ENCODE measurements at regions of chr2 and their contacts with region 1.

Region 1: GRCh38 chr2:71923887-71924533 is 223.7 kb downstream of the CYP26B1 start:
- DNase-seq: peak in 1 of 2 donors; percentile 75
- ATAC-seq: peak in 2 of 3 donors; percentile 58 to 67
- H3K4me3 ChIP-seq: no peak overlapping the region
- H3K4me3 Mint-ChIP-seq: no peak overlapping the region
- H3K27ac ChIP-seq: no peak overlapping the region
- H3K27ac Mint-ChIP-seq: no peak overlapping the region
- H3K4me1 ChIP-seq: no peaks in the 10 kb centered on the region
- H3K4me1 Mint-ChIP-seq: no peaks in the 10 kb centered on the region
- H3K27me3 ChIP-seq: no peaks in the 10 kb centered on the region
- H3K27me3 Mint-ChIP-seq: peaks cover 0 to 3% of the 10 kb centered on the region in 2 donors
- CTCF ChIP-seq: peak; percentile 74

Region 2: DNA sequence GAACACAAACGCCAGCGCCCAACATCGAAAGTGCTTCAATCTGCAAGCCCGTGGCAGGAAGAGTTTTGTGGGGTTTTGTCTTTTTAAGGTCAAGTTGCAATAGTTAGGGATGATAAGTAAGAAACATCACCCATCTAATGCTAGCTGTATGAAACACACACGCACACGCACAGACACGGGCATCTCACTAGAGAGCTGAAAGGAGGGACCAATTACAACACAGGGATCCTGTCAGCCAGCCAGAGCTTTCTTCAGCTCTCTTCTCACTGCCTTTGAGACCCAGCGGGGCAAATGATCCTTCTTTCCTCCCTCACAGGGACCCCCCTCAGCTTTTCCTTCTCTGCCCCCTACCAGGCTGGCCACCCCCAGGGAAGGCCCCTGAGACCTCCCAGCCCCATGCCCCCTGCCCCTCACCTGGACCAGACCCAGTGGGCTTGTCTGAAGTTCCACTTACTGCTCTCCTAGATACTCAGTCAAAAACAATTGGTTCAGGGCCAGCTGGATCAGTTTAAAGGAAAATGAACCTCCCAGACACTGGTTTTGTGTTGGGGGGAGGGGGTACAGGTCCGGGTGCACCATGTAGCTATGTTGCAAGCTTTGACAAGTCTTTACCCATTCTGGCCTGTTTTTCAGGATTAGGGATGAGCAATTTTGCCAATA is 205.8 kb after region 1 on chr2:
- intact Hi-C with region 1: no loop called
- DNase-seq: no peak
- ATAC-seq: no peak
- H3K4me3 ChIP-seq: no peak overlapping the region
- H3K4me3 Mint-ChIP-seq: no peak overlapping the region
- H3K27ac ChIP-seq: no peak overlapping the region
- H3K27ac Mint-ChIP-seq: no peak overlapping the region
- H3K4me1 ChIP-seq: no peaks in the 10 kb centered on the region
- H3K4me1 Mint-ChIP-seq: no peaks in the 10 kb centered on the region
- H3K27me3 ChIP-seq: no peaks in the 10 kb centered on the region
- H3K27me3 Mint-ChIP-seq: no peaks in the 10 kb centered on the region
- CTCF ChIP-seq: no peak

Region 3: DNA sequence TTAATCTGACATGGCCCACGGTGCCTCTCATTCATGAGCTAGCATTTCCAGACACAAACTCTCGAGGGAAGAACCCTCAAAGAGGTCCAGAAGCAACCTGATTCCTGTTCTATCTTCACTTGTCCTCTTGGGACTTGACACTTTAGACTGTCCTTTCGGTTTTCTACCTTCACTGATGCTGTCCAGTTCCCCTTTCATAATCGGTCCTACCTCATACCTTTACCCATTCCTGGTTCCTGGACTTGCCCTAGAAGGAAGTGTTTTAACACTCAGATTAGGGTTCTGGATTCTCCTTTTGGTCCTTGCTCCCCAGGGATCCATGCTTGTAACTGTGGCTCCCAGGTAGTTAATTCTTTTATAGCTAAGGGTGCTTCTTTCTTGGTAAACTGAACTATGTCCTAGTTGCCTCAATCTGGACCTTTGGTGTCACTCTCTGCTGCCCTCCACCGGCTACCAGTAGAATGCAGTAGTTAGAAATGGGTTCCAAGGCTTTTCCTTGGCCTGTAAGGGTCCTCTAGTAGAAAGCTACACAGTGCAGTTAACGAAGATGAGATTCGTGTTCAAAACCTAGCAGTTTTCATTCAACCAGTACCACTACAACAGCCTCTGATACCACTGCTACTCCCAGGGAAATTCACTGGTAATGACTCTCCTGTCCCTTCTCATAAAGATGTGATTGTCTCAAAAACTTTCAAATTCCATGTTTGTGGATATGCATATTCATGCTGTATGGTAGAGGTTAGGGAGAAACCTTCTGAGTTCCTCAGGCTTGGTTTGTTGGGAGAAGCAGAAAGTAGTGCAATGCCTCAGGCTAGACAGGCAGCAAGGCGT is 401.8 kb after region 1 on chr2:
- intact Hi-C with region 1: no loop called
- DNase-seq: no peak
- ATAC-seq: no peak
- H3K4me3 ChIP-seq: no peak overlapping the region
- H3K4me3 Mint-ChIP-seq: no peak overlapping the region
- H3K27ac ChIP-seq: no peak overlapping the region
- H3K27ac Mint-ChIP-seq: no peak overlapping the region
- H3K4me1 ChIP-seq: no peaks in the 10 kb centered on the region
- H3K4me1 Mint-ChIP-seq: peaks cover 0 to 4% of the 10 kb centered on the region in 2 donors
- H3K27me3 ChIP-seq: no peaks in the 10 kb centered on the region
- H3K27me3 Mint-ChIP-seq: no peaks in the 10 kb centered on the region
- CTCF ChIP-seq: no peak

Region 4: DNA sequence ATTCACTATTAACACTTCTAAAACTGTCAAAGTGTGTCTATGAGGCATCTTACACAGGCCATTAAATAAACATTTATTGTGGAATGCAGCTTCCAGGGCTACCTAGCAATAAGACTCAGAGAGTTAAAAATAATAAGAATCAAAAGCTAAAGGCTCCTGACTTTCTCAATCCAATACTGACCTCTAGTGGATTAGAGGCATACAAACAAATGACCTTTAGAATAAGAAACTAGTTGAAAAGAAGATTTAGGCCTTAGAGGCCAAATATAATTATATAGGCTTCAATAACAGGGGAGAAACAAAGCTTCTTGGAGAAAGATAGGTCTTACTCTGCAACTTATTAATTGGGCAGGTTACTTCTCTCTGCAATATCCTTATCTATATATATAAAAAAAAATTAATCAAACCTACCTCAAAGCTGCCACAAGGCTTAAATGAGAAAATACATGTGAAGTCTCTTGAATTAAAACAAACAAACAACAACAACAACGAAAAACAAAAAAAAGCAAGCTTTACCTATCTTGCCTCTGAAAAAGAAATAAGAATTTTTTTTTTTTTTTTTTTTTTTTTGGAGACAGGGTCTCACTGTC is 655.7 kb after region 1 on chr2:
- intact Hi-C with region 1: loop called (anchors 1 kb)
- DNase-seq: peak in 1 of 2 donors; percentile 47
- ATAC-seq: peak in 2 of 3 donors; percentile 53 to 61
- H3K4me3 ChIP-seq: no peak overlapping the region
- H3K4me3 Mint-ChIP-seq: no peak overlapping the region
- H3K27ac ChIP-seq: no peak overlapping the region
- H3K27ac Mint-ChIP-seq: no peak overlapping the region
- H3K4me1 ChIP-seq: no peaks in the 10 kb centered on the region
- H3K4me1 Mint-ChIP-seq: no peaks in the 10 kb centered on the region
- H3K27me3 ChIP-seq: no peaks in the 10 kb centered on the region
- H3K27me3 Mint-ChIP-seq: no peaks in the 10 kb centered on the region
- CTCF ChIP-seq: peak; percentile 67

Region 5: GRCh38 chr2:72745679-72746368 is 821.8 kb after region 1 on chr2:
- intact Hi-C with region 1: loop called (anchors 1 kb)
- DNase-seq: peak in 1 of 2 donors; percentile 62
- ATAC-seq: peak in 1 of 3 donors; percentile 33
- H3K4me3 ChIP-seq: no peak overlapping the region
- H3K4me3 Mint-ChIP-seq: no peak overlapping the region
- H3K27ac ChIP-seq: no peak overlapping the region
- H3K27ac Mint-ChIP-seq: no peak overlapping the region
- H3K4me1 ChIP-seq: no peaks in the 10 kb centered on the region
- H3K4me1 Mint-ChIP-seq: no peaks in the 10 kb centered on the region
- H3K27me3 ChIP-seq: no peaks in the 10 kb centered on the region
- H3K27me3 Mint-ChIP-seq: no peaks in the 10 kb centered on the region
- CTCF ChIP-seq: peak; percentile 61

Measured in natural killer cell (primary cell).